Activated CD4-positive, alpha-beta T cell treated with anti-CD3 and anti-CD28 coated beads for 36 hours (primary cell): ENCODE measurements at regions of chr1 and their contacts with region 1.

Region 1: DNA sequence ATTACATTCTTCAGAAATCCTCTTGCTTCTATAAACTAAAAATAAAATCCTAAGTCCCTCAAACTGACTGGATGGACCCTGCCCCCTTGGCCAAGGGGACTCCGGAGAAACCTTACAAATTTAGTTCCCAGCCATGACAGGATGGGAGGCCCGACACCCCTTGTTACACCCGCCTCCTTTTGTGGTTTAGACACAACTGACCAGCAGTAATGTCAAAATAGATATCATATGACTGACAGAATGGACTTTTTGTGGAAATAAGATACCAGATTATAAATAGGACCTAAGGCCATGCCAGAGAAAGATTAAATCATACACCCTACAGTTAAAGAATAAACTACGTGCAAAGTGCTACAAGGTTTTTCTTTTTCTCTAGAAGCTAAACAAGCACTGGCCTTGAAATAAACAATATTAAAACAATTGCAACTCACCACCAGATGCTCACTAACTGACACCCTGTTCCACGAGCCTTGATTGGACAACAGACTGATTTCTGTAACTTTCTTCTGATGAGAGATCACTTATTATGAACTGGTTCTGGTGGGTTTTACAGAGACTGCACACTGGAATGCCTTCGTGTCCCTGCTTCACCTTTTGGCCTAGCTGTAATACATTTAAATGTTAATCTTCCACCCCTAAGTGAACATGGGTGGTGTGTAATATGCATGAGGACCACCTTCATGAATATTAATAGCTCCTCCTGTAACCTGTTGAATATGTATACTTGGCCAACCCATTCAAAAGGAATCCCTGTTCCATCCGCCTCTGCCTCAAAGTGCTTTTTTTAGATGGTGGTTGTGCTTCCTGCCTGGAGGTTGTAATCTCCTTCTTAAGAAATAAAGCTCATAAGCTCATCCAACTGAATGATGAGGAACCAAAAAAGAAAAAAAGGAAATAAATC is 99.6 kb downstream of the ODF2L start:
- DNase-seq: no peak
- ATAC-seq: no peak
- H3K4me3 Mint-ChIP-seq: no peak overlapping the region
- H3K27ac Mint-ChIP-seq: no peak overlapping the region
- H3K4me1 Mint-ChIP-seq: no peaks in the 10 kb centered on the region
- H3K27me3 Mint-ChIP-seq: no peaks in the 10 kb centered on the region

Region 2: GRCh38 chr1:86317926-86318325 is 21.4 kb after region 1 on chr1:
- CTCF ChIA-PET with region 1: no interaction called
- POLR2A ChIA-PET with region 1: no interaction called
- intact Hi-C with region 1: loop called in 1 of 2 experiments (anchors 2 kb)
- DNase-seq: no peak
- ATAC-seq: no peak
- H3K4me3 Mint-ChIP-seq: no peak overlapping the region
- H3K27ac Mint-ChIP-seq: no peak overlapping the region
- H3K4me1 Mint-ChIP-seq: no peaks in the 10 kb centered on the region
- H3K27me3 Mint-ChIP-seq: no peaks in the 10 kb centered on the region